ENCODE measurements at regions of chr5 and their contacts with region 1.

Region 1: GRCh38 chr5:115806981-115807653 is 9.3 kb downstream of the CDO1 start:
- DNase-seq: no peak
- H3K4me3 ChIP-seq: no peak overlapping the region
- H3K27ac ChIP-seq: no peak overlapping the region
- H3K4me1 ChIP-seq: no peaks in the 10 kb centered on the region
- H3K27me3 ChIP-seq: peaks cover 0 to under 1% (median 0%) of the 10 kb centered on the region in 3 donors
- CTCF ChIP-seq: no peak
- EP300 ChIP-seq: no peak
- POLR2A ChIP-seq: no peak

Region 2: DNA sequence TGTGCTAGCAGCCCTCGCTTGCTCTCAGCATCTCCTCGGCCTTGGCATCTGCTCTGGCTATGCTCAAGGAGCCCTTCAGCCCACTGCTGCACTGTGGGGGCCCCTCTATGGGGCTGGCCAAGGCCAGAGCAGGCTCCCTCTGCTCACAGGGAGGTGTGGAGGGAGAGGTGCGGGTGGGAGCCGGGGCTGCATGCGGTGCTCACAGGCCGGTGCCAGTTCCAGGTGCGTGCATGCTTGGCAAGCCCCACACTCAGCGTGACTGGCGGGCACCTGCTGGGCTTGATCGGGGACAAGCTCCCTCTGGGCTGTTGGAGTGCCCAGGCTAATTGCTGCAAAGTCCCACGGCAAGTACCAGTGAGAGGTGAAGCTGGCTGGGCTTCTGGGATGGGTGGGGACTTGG is 807.9 kb before region 1 on chr5:
- intact Hi-C with region 1: no loop called
- DNase-seq: no peak
- H3K4me3 ChIP-seq: no peak overlapping the region
- H3K27ac ChIP-seq: no peak overlapping the region
- H3K4me1 ChIP-seq: no peaks in the 10 kb centered on the region
- H3K27me3 ChIP-seq: no peaks in the 10 kb centered on the region
- CTCF ChIP-seq: no peak
- EP300 ChIP-seq: no peak
- POLR2A ChIP-seq: no peak

Region 3: DNA sequence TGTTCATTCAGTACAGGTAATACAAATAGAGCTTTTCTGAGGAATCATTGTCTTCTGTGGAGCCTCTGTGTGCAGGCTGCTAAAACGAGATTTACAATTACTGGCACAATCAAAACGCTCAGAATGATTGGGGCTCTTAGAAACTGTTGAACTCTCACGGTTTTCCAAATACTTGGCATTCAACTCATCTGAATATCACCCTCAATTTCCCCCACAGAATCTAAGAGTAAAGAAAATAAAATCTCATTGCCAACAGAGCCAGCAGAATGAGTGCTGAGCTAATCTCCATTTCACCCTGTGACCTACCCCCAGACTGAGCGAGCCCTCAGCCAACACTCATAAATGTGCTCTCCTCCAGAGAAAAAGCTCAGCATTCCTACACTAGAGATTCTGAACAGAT is 146.0 kb before region 1 on chr5:
- intact Hi-C with region 1: loop called (anchors 10 kb)
- DNase-seq: peak in 1 of 2 donors; percentile 27
- H3K4me3 ChIP-seq: no peak overlapping the region
- H3K27ac ChIP-seq: no peak overlapping the region
- H3K4me1 ChIP-seq: no peaks in the 10 kb centered on the region
- H3K27me3 ChIP-seq: no peaks in the 10 kb centered on the region
- CTCF ChIP-seq: no peak
- EP300 ChIP-seq: no peak
- POLR2A ChIP-seq: no peak

Region 4: DNA sequence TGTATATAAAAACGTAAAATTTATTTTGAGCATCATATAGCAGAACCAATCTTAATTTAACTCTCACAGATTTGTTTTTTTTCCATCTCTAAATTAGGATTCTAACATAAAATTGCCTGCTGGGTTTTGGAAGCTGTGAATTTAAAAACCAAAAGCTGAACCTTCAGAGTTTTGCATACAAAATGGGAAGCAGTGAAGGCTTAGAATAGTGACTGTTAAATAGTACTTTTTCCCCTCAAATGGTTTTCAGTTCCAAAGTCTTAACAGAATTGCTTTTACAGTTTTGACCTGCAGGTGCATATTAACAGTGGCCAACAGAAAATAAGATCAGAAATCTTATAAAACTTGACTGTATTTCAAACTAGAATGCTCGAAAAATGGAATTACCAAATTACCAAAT is 100.1 kb after region 1 on chr5:
- intact Hi-C with region 1: no loop called
- DNase-seq: no peak
- H3K4me3 ChIP-seq: no peak overlapping the region
- H3K27ac ChIP-seq: no peak overlapping the region
- H3K4me1 ChIP-seq: no peaks in the 10 kb centered on the region
- H3K27me3 ChIP-seq: no peaks in the 10 kb centered on the region
- CTCF ChIP-seq: no peak
- EP300 ChIP-seq: no peak
- POLR2A ChIP-seq: no peak